A673 (cell line): ENCODE measurements at regions of chr4 and their contacts with region 1.

Region 1: GRCh38 chr4:28357990-28358389 is 1497.3 kb downstream of the STIM2 start:
- DNase-seq: peak; percentile 77
- H3K4me3 ChIP-seq: no peak overlapping the region
- H3K27ac ChIP-seq: no peak overlapping the region
- H3K4me1 ChIP-seq: peaks cover 29% of the 10 kb centered on the region
- H3K27me3 ChIP-seq: no peaks in the 10 kb centered on the region
- CTCF ChIP-seq: peak; percentile 68

Region 2: GRCh38 chr4:28247805-28248204 is 110.2 kb before region 1 on chr4:
- CTCF ChIA-PET with region 1: no interaction called
- POLR2A ChIA-PET with region 1: no interaction called
- intact Hi-C with region 1: no loop called
- DNase-seq: no peak
- H3K4me3 ChIP-seq: no peak overlapping the region
- H3K27ac ChIP-seq: no peak overlapping the region
- H3K4me1 ChIP-seq: no peaks in the 10 kb centered on the region
- H3K27me3 ChIP-seq: no peaks in the 10 kb centered on the region
- CTCF ChIP-seq: no peak

Region 3: GRCh38 chr4:28518561-28519165 is 160.7 kb after region 1 on chr4:
- CTCF ChIA-PET with region 1: no interaction called
- POLR2A ChIA-PET with region 1: no interaction called
- intact Hi-C with region 1: loop called (anchors 2 kb)
- DNase-seq: no peak
- H3K4me3 ChIP-seq: no peak overlapping the region
- H3K27ac ChIP-seq: peak overlapping the region; percentile 87
- H3K4me1 ChIP-seq: peaks cover 21% of the 10 kb centered on the region
- H3K27me3 ChIP-seq: no peaks in the 10 kb centered on the region
- CTCF ChIP-seq: no peak